Lower lobe of right lung (tissue), 2 donors: ENCODE measurements at regions of chr9 and their contacts with region 1.

Region 1: GRCh38 chr9:34403554-34404380 is 27.1 kb upstream of the MYORG start:
- DNase-seq: peak; percentile 62
- ATAC-seq: peak; percentile 65 to 69
- H3K4me3 ChIP-seq: no peak overlapping the region
- H3K27ac ChIP-seq: no peak overlapping the region
- H3K4me1 ChIP-seq: no peaks in the 10 kb centered on the region
- H3K27me3 ChIP-seq: no peaks in the 10 kb centered on the region
- CTCF ChIP-seq: peak; percentile 97

Region 2: DNA sequence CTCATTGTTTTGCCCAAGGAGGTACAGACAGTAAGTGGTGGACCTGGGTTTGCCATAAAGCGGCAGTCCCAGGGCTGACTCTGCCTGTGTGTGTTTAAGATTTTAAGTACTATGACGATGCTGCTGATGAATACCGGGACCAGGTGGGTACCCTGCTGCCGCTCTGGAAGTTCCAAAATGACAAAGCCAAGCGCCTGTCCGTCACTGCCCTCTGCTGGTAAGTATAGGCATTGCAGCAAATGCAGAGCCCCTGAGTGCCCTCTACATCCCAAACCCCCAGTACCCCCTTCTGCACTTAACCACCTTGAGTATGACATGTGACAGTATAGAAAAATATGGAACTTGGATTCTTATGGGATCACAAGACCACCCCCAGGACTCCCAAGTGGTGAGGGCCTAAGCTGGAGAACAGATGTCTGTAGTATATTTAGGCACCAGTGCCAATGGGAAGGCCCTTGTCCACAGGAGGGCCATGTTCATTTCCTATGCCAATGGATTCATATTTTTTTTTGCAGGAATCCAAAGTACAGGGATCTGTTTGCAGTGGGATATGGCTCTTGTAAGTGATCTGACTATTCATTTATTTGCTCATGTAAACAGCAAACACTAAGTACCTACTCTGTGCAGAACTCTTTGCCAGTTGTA is 97.0 kb after region 1 on chr9:
- intact Hi-C with region 1: loop called (anchors 10 kb)
- DNase-seq: peak; percentile 58
- ATAC-seq: peak; percentile 67 to 78
- H3K4me3 ChIP-seq: no peak overlapping the region
- H3K27ac ChIP-seq: no peak overlapping the region
- H3K4me1 ChIP-seq: peaks cover 21% of the 10 kb centered on the region
- H3K27me3 ChIP-seq: no peaks in the 10 kb centered on the region
- CTCF ChIP-seq: peak; percentile 97